ENCODE measurements at regions of chr21 and their contacts with region 1.

Region 1: GRCh38 chr21:36706951-36707762 is 8.2 kb downstream of the SIM2 start:
- DNase-seq: no peak
- H3K4me3 Mint-ChIP-seq: no peak overlapping the region
- H3K27ac Mint-ChIP-seq: peak overlapping the region; percentile 29
- H3K4me1 Mint-ChIP-seq: peaks cover 3% of the 10 kb centered on the region
- H3K27me3 Mint-ChIP-seq: peaks cover 78% of the 10 kb centered on the region

Region 2: DNA sequence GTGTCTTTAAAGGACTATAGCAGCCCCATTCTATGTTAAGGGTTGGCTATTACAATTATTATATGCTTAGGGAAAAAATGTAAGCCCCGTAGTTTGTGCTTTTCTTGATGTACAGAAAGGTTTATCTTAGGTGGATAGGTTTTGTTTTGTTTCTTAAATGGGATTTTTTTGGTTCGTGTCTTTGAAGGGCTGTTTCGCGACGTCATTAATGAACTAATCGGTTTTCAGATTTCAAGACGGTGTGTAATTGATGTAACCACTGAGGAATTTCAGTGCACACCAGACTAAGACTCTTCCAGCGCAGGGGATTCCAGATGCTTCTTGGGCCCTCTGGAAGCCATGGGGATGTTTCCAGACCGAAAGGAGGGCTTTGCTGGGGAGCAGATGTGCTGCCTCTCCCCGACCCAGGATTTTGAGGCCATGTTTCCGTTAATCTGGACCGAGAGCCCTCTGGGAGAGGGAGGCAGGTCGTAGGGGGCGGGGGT is 13.1 kb before region 1 on chr21:
- intact Hi-C with region 1: loop called (anchors 2 kb)
- DNase-seq: no peak
- H3K4me3 Mint-ChIP-seq: no peak overlapping the region
- H3K27ac Mint-ChIP-seq: peak overlapping the region; percentile 72
- H3K4me1 Mint-ChIP-seq: peaks cover 3% of the 10 kb centered on the region
- H3K27me3 Mint-ChIP-seq: peaks cover 78% of the 10 kb centered on the region